ENCODE measurements at regions of chr19 and their contacts with region 1.

Region 1: DNA sequence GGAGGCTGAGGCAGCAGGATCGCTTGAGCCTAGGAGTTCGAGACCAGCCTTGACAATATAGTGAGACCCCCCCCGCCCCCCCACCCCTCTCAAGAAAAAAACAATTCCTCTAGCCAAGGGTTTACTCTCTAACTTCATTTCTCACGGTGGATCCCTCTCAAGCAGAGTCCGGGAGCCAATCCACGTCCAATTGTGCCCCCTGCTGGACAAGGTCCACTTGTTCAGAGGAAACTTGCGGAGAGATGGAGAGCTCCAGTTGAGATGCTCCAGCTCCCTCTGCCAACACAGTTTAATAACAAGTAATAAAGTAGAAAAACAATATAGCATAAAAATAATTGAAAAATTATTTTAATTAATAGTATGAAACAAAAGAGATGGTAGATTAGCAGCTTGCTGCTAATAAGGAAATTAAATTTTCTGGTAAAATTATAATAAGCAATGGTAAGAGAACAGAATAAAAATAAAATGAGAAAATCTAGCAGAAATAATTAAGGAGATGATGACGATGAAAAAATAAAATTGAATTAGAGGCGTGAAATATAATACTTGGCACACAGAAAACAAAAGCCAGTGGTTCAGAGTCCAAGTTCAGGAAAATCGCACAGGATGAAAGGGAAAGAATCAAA is 14.5 kb upstream of the SIGLEC14 start:
- DNase-seq: peak; percentile 54
- ATAC-seq: peak; percentile 49; the same call in 2 of the 3 replicates
- H3K4me3 ChIP-seq: no peak overlapping the region
- H3K27ac ChIP-seq: no peak overlapping the region
- H3K4me1 ChIP-seq: no peaks in the 10 kb centered on the region
- H3K27me3 ChIP-seq: no peaks in the 10 kb centered on the region
- CTCF ChIP-seq: peak; percentile 65
- EP300 ChIP-seq: no peak
- POLR2A ChIP-seq: no peak
- RAD21 ChIP-seq: no peak

Region 2: GRCh38 chr19:51417107-51417809 is 243.8 kb before region 1 on chr19 and contains the start of gene SIGLEC10:
- CTCF ChIA-PET with region 1: no interaction called
- POLR2A ChIA-PET with region 1: no interaction called
- in situ Hi-C with region 1: no loop called
- intact Hi-C with region 1: no loop called
- DNase-seq: no peak
- ATAC-seq: no peak
- H3K4me3 ChIP-seq: no peak within 1 kb of the TSS
- H3K27ac ChIP-seq: no peak within 1 kb of the TSS
- H3K4me1 ChIP-seq: no peaks in the 10 kb centered on the region
- H3K27me3 ChIP-seq: no peaks in the 10 kb centered on the region; a peak in 2 of 5 replicates
- CTCF ChIP-seq: no peak
- EP300 ChIP-seq: no peak
- POLR2A ChIP-seq: no peak
- RAD21 ChIP-seq: no peak
- total RNA-seq, gene SIGLEC10: not detected in 2 replicates

Region 3: DNA sequence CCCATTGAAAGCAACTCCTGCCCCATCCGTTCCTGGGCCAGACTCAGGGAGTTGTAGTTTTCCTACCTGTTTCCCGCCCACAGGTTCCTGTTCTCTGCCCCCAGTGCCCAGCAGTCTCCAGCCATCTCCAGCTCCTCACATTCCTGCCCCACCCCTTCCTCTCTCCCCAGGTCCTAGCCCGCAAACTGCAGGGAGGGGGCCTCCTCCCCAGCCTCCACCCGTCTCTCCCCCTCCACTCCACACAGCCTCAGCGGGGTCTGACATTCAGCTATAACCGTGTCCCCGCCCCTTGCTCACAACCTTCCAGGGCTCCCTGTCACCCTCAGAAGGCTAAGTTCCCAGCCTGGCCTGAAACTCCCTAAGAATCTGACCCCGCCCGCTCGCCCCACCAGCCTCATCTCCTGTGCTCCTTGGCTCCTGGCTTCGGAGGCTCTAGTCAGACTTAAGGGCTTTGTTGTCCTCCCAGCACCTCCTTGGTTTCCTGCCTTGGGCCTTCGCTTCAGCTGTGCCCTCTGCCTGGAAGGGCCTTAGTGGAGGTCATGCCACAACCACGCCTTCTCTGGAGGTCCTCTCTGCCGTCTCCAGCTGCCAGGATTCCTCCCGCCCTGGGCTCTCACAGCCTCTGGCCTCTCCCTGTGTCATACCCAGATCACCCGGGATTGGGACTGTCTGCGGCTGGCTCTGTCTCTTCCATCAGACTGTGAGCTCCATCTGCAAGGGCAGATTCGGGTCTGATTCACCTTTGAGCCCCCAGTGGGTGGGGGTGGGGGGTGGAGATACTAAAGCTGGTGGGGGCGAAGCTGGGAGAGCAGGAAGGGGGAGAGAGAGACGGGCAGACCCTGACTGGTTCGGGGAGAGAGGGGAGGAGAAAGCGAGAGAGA is 26.9 kb after region 1 on chr19:
- CTCF ChIA-PET with region 1: no interaction called
- POLR2A ChIA-PET with region 1: no interaction called
- in situ Hi-C with region 1: no loop called
- intact Hi-C with region 1: loop called (anchors 1 kb)
- DNase-seq: no peak
- ATAC-seq: peak; percentile 65
- H3K4me3 ChIP-seq: peak overlapping the region; percentile 50 to 75 (median 74)
- H3K27ac ChIP-seq: peak overlapping the region; percentile 41
- H3K4me1 ChIP-seq: peaks cover 23% of the 10 kb centered on the region
- H3K27me3 ChIP-seq: no peaks in the 10 kb centered on the region; a peak in 1 of 5 replicates
- CTCF ChIP-seq: no peak
- EP300 ChIP-seq: no peak
- POLR2A ChIP-seq: no peak
- RAD21 ChIP-seq: no peak

Measured in HepG2 (cell line).